ENCODE measurements at regions of chr11 and their contacts with region 1.

Region 1: GRCh38 chr11:30196400-30197206 is 34.2 kb upstream of the FSHB start:
- DNase-seq: no peak
- H3K4me3 ChIP-seq: no peak overlapping the region
- CTCF ChIP-seq: peak; percentile 81

Region 2: GRCh38 chr11:29432719-29433325 is 763.8 kb before region 1 on chr11:
- CTCF ChIA-PET with region 1: interaction called, 20 read pairs
- POLR2A ChIA-PET with region 1: no interaction called
- DNase-seq: no peak
- H3K4me3 ChIP-seq: no peak overlapping the region
- CTCF ChIP-seq: peak; percentile 23

Region 3: GRCh38 chr11:30062103-30062502 is 134.5 kb before region 1 on chr11:
- CTCF ChIA-PET with region 1: no interaction called
- POLR2A ChIA-PET with region 1: no interaction called
- DNase-seq: no peak
- H3K4me3 ChIP-seq: no peak overlapping the region
- CTCF ChIP-seq: no peak

Region 4: DNA sequence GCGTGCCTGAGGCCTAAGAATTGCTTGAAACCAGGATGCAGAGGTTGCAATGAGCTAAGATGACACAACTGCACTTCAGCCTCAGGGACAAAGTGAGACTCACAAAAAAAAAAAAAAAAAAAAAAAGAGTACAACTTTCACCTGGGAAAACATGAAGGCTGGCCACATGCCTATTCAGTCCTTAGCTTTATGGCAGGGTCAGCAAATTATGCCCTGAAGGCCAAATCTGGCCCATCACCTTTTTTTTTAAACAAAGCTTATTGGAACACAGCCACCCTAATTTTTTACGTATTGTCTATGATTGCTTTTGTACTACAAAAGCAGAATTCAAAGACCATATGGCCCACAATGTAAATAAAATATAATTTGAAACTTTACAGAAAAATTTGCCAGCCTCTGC is 42.4 kb after region 1 on chr11:
- CTCF ChIA-PET with region 1: no interaction called
- POLR2A ChIA-PET with region 1: no interaction called
- DNase-seq: no peak
- H3K4me3 ChIP-seq: no peak overlapping the region
- CTCF ChIP-seq: no peak